ENCODE measurements at regions of chr14 and their contacts with region 1.

Region 1: DNA sequence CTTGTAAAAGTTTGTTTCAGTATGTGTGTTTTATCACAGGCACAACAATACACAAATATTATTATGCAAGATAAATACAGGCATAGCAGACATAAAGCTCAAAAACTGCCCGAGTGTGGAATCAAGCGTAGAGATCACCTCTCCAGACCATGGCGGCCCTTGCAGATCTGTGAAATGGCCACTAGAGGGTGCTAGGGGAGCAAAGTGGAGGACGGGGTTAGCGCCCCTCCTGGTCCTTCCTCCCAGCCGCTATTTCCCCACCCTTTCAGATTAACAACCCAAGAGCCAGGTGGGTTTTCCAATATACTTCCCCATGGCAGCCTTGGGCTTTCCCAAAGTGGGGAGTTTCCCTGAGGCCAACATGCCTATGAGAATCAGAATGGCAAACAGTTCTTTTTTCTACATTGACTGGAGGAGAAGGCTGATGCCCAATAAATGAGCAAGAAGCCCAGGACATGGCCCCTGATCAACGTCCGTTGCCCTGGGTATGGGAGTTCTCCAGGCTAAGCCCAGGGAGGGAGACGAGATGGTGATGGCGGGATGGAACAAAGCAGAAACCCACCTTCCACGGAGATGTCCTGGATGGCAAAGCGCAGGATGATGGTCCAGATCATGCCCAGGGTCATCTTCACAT is 67.4 kb downstream of the ACTN1 start:
- DNase-seq: peak; percentile 59 to 94
- H3K4me3 ChIP-seq: no peak overlapping the region
- CTCF ChIP-seq: peak in 1 of 3 donors; percentile 75
- POLR2A ChIP-seq: no peak

Region 2: GRCh38 chr14:68598621-68599447 is 312.9 kb before region 1 on chr14:
- intact Hi-C with region 1: no loop called
- DNase-seq: peak; percentile 65 to 93
- H3K4me3 ChIP-seq: no peak overlapping the region
- CTCF ChIP-seq: no peak
- POLR2A ChIP-seq: no peak

Region 3: DNA sequence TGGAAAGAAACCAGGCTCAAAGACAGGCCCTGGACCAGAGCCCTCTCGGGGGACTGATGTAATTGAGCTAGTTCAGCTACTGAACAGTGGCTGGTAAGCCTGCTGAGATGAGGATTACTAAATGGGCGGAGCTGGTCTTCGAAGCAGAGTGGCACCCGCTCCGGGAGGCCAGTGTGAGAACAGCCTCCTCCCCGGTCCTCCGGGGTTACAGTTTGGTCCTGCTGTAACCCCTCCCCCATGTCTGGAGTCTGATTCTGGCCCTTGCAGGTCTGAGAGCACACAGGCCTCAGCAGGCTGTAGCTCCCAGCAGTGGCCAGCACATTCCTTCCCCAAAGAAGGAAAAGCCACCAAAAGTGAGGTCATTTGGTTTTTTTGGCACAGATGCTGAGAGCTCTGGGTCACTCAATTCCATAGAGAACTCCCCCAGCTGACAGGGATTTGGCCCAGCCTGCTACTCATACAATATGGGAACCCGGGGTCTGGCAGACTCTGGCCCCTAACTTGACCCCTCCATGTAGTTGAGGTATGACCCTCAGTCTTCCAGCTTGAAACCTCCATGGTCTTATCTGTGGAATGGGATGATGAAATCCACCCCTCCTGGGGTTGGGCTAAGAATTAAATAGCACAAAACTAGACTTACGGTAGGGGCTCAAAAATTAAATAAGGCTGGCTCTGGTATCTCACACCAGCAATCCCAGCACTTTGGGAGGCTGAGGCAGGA is 28.3 kb after region 1 on chr14:
- intact Hi-C with region 1: no loop called
- DNase-seq: peak in 1 of 2 donors; percentile 90
- H3K4me3 ChIP-seq: no peak overlapping the region
- CTCF ChIP-seq: no peak
- POLR2A ChIP-seq: no peak

Region 4: GRCh38 chr14:68961781-68962584 is 50.3 kb after region 1 on chr14:
- intact Hi-C with region 1: no loop called
- DNase-seq: no peak
- H3K4me3 ChIP-seq: no peak overlapping the region
- CTCF ChIP-seq: no peak
- POLR2A ChIP-seq: no peak

Region 5: GRCh38 chr14:69090187-69090789 is 178.6 kb after region 1 on chr14:
- intact Hi-C with region 1: loop called (anchors 5 kb)
- DNase-seq: no peak
- H3K4me3 ChIP-seq: no peak overlapping the region
- CTCF ChIP-seq: no peak
- POLR2A ChIP-seq: no peak

Region 6: GRCh38 chr14:70086685-70087379 is 1175.1 kb after region 1 on chr14:
- intact Hi-C with region 1: no loop called
- DNase-seq: no peak
- H3K4me3 ChIP-seq: no peak overlapping the region
- CTCF ChIP-seq: no peak
- POLR2A ChIP-seq: no peak

Measured in lower leg skin (tissue), 4 donors.